Lower leg skin (tissue), 4 donors: ENCODE measurements at regions of chr4 and their contacts with region 1.

Region 1: GRCh38 chr4:61648264-61648663 is 448.1 kb downstream of the ADGRL3 start:
- DNase-seq: no peak
- H3K4me3 ChIP-seq: no peak overlapping the region
- CTCF ChIP-seq: no peak
- POLR2A ChIP-seq: no peak

Region 2: GRCh38 chr4:62222121-62222520 is 573.9 kb after region 1 on chr4:
- intact Hi-C with region 1: loop called (anchors 5 kb)
- DNase-seq: no peak
- H3K4me3 ChIP-seq: no peak overlapping the region
- CTCF ChIP-seq: no peak
- POLR2A ChIP-seq: no peak